ENCODE measurements at regions of chr10 and their contacts with region 1.

Region 1: GRCh38 chr10:47047671-47048525 is 136.7 kb downstream of the PTPN20 start:
- H3K4me3 ChIP-seq: no peak overlapping the region
- H3K27ac ChIP-seq: no peak overlapping the region
- H3K4me1 ChIP-seq: no peaks in the 10 kb centered on the region
- CTCF ChIP-seq: peak; percentile 70

Region 2: DNA sequence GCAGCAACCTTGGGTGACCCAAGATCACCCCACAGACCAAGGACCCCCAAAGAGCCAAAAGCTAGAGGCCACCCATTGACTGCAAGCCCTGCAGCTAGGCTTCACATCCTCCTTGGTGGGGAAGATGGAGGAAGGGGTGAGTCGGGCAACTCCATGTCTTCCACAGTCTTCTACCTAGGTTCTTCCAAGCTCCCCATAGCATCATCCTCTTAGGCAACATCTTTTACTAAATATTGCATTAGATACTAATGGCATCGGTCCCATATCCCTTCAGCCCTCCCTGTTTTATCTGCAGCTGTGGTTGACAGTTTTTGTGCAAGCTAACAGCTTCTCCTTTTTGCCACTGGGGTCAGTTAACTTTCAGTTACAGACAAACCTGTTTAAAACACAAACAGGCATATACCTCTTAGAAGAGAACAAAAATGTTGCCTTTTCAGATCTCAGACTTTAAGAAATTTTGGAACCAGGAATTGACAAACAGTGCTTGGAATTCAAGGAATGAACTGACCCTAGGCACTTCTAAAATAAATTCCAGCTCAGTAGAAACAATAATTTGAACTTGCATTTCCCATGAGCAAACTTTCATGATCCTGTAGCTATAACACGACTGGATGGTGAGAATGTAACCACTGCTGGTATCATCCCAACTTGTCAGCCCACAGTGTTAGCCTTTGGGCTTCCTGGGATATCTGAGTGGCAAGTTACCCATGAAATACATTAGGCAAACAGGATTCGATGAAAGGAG is 967.9 kb before region 1 on chr10:
- CTCF ChIA-PET with region 1: no interaction called
- POLR2A ChIA-PET with region 1: no interaction called
- H3K4me3 ChIP-seq: no peak overlapping the region
- H3K27ac ChIP-seq: no peak overlapping the region
- H3K4me1 ChIP-seq: no peaks in the 10 kb centered on the region
- CTCF ChIP-seq: no peak

Region 3: GRCh38 chr10:47058961-47059391 is 11.1 kb after region 1 on chr10:
- CTCF ChIA-PET with region 1: interaction called, 17 read pairs
- POLR2A ChIA-PET with region 1: no interaction called
- H3K4me3 ChIP-seq: no peak overlapping the region
- H3K27ac ChIP-seq: no peak overlapping the region
- H3K4me1 ChIP-seq: no peaks in the 10 kb centered on the region
- CTCF ChIP-seq: no peak

Region 4: DNA sequence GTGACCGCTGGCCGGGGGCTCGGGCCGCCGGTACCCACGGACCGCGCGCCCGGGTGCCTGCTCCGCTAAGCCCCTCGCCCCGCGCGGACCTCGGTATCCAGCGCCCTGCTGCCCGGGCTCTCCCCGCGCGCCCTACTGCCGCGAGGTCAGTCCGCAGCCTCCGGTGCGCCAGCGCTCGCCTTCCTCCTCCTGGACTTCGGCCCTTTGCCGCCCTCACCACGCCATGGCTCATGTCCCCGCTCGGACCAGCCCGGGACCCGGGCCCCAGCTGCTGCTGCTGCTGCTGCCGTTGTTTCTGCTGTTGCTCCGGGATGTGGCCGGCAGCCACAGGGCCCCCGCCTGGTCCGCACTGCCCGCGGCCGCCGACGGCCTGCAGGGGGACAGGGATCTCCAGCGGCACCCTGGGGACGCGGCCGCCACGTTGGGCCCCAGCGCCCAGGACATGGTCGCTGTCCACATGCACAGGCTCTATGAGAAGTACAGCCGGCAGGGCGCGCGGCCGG is 252.6 kb after region 1 on chr10:
- CTCF ChIA-PET with region 1: interaction called, 15 read pairs
- POLR2A ChIA-PET with region 1: no interaction called
- H3K4me3 ChIP-seq: peak overlapping the region; percentile 25
- H3K27ac ChIP-seq: no peak overlapping the region
- H3K4me1 ChIP-seq: no peaks in the 10 kb centered on the region
- CTCF ChIP-seq: no peak

Region 5: DNA sequence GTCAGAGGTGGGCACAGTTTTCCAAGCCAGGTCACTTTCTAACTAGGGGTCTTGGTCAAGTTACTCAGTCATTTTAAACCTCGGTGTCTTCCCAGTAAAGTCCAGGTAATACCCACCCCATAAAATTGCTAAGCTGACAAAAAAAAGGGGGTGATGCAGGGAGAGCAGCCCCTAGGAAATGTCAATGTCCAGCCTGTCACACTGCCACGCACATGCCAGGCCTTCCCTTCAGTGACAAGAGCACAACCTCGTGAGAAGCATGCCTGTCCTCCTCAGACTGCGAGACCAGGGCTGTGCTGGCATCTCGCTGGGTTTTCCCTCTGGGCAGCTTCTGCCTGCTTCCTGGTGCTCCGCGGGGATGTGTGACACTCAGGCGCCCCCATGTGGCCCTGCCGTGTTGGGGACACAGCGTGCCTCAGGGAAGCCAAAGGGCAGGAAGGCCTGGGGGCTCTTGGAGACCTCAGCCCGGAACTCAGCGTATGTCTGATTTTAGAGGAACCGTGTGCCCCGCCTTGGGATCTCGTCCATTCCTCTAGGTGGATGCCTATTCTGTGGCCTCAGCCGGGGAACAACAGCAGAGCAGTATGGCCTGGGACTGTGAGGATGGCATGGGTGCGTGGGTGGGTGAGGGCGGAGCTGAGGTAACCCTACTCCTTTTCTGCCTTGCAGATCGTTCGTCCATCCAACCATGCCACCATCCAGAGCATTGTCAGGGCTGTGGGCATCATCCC is 264.2 kb after region 1 on chr10:
- CTCF ChIA-PET with region 1: interaction called, 131 read pairs
- POLR2A ChIA-PET with region 1: interaction called, 5 read pairs
- H3K4me3 ChIP-seq: no peak overlapping the region
- H3K27ac ChIP-seq: no peak overlapping the region
- H3K4me1 ChIP-seq: no peaks in the 10 kb centered on the region
- CTCF ChIP-seq: peak; percentile 80

Region 6: DNA sequence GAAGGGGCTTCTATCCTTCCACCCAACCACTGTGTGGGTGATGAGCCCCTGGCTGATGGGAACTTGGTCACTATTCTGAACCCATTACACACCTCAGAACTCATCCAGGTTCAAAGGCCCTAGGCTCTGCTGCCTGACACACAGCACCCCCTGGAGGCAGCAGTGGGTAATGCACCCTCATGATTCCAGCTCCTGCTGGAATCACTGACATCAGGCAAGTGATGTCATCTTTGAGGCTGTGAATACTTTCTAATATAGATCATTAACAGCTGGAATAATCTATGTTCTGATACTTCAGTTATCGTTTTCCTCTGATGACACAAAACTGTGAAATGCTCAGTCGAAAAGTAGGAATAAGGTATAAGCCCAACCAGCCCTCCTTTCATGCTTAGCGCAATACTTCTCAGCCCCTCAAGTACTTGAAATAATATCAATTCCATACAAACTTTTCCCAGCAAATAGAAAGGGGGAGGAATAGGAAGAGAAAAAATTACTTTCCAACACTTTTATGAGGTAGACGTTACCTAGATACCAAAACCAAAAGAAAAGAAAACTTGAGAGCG is 292.8 kb after region 1 on chr10:
- CTCF ChIA-PET with region 1: interaction called, 10 read pairs
- POLR2A ChIA-PET with region 1: no interaction called
- H3K4me3 ChIP-seq: no peak overlapping the region
- H3K27ac ChIP-seq: no peak overlapping the region
- H3K4me1 ChIP-seq: no peaks in the 10 kb centered on the region
- CTCF ChIP-seq: peak; percentile 72